Ascending aorta (tissue), 2 donors: ENCODE measurements at regions of chr12 and their contacts with region 1.

Region 1: DNA sequence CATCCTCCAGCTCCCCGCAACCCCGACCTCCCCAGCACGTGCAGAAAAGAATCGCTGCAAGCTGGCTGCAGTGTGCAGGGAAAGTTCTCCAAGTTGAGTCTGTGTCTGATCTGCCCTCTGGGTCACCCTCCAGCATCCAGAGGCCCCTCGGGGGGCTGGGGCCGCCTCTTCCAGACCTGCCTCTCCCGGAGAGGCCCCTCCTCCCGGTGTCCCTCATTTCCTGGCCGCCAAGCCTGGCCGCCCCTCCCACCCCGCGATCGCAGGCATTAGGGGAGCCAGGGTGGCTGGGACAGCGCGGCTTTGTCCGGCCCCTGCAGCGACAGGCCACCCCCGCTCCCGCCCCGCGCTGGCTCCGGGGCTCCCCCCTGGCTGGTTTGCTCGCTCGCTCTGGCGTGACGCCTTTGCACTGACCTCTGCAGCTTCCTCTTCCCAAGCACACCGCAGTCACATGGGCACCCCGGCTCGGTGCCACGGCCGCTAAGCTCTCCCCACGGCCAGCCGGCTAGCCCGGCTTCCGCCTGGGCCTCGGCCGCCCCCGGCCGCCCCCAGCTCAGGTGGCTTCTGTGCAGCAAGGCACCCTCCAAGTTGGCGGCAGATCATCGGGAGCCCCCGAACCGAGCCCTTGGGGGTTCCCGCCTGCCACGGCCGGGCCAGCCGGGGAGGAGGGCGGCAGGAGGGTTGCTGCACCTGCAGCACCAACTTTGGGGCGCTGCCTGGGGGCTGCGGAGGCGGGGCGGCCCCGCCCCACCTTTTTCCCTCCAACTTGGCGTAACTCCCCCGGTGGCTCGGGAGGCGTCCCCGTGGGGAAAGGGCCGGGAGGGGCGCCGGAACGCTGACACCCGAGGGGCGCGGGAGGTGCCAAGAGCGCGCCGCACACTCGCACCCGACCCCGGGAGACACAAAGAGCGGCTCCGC is 43.7 kb downstream of the KDM2B start:
- DNase-seq: peak; percentile 57 to 89
- H3K4me3 ChIP-seq: peak overlapping the region; percentile 72 to 82
- H3K27ac ChIP-seq: peak overlapping the region; percentile 77 to 85
- H3K4me1 ChIP-seq: peaks cover 8 to 12% of the 10 kb centered on the region in 2 donors
- H3K27me3 ChIP-seq: no peaks in the 10 kb centered on the region
- CTCF ChIP-seq: no peak

Region 2: DNA sequence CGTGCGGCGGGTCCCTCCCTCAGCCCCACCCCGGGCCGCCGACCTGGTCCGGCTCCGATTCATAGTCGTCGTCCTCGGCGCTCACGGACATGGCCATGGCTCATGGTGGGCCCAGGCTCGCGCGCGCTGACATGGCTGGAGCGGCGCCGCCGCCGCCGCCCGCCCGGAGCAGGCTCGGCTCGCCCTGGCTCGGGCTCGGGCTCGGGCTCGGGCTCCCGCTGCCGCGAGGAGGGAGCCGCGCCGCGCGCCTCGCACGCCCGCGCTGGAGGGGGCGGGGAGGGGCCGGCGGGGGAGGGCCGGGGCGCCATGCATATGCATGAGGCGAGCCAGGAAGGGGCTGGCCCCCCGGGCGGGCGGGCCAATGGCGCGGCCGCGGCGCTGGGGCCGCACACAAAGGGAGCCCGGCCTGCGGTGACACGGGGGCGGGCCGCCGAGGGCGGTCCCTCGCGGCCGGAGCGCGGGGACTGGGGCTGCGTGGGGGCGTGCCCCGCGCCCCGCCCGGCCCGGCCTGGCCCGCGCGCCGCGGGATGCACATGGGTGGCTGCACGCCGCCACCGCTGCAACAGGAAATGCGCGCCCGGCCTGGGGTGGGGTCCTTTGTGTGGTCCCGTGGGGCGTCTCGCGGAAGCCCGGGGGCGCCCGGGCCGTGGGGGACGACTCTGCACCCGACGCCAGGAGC is 69.9 kb before region 1 on chr12:
- intact Hi-C with region 1: loop called (anchors 2 kb)
- DNase-seq: peak; percentile 73 to 94
- H3K4me3 ChIP-seq: peak overlapping the region; percentile 84 to 97
- H3K27ac ChIP-seq: peak overlapping the region; percentile 69 to 92
- H3K4me1 ChIP-seq: peaks cover 0 to 5% of the 10 kb centered on the region in 2 donors
- H3K27me3 ChIP-seq: no peaks in the 10 kb centered on the region
- CTCF ChIP-seq: no peak

Region 3: GRCh38 chr12:121499929-121500793 is 37.0 kb before region 1 on chr12:
- intact Hi-C with region 1: loop called (anchors 1 kb)
- DNase-seq: peak in 1 of 2 donors; percentile 88
- H3K4me3 ChIP-seq: peak overlapping the region; percentile 43 to 57
- H3K27ac ChIP-seq: peak overlapping the region; percentile 69 to 82
- H3K4me1 ChIP-seq: no peaks in the 10 kb centered on the region
- H3K27me3 ChIP-seq: no peaks in the 10 kb centered on the region
- CTCF ChIP-seq: peak; percentile 71 to 96 (median 95)

Region 4: GRCh38 chr12:121678716-121679580 is 141.8 kb after region 1 on chr12:
- intact Hi-C with region 1: loop called (anchors 5 kb)
- DNase-seq: no peak
- H3K4me3 ChIP-seq: no peak overlapping the region
- H3K27ac ChIP-seq: no peak overlapping the region
- H3K4me1 ChIP-seq: no peaks in the 10 kb centered on the region
- H3K27me3 ChIP-seq: no peaks in the 10 kb centered on the region
- CTCF ChIP-seq: no peak